B cell (primary cell): ENCODE measurements at regions of chr3 and their contacts with region 1.

Region 1: DNA sequence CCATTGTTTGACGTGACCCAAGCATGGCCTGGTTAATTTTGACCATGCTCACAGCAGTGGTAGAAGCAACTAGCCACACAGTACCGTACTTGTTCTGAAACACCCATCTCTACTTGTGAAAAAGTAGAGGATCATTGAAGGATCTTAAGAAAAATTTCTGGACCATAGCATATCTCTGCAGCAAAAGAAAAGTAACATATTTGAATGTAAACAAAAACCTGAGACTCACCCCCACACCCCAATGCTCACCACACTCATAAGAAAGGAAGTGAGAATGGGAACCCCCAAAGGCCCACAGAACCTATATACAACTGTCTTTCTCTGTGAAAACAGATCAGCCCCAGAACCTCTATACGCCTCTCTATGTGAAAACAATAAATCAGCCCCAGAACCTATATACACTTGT is 33.8 kb upstream of the TFRC start:
- DNase-seq: peak; percentile 80
- ATAC-seq: peak; percentile 66
- H3K4me3 ChIP-seq: peak overlapping the region in 2 of 5 experiments; percentile 2 to 24
- H3K4me3 Mint-ChIP-seq: no peak overlapping the region
- H3K27ac ChIP-seq: peak overlapping the region; percentile 79 to 90
- H3K27ac Mint-ChIP-seq: no peak overlapping the region
- H3K4me1 ChIP-seq: peaks cover 67 to 74% of the 10 kb centered on the region in 2 donors
- H3K4me1 Mint-ChIP-seq: peaks cover 49% of the 10 kb centered on the region
- H3K27me3 ChIP-seq: no peaks in the 10 kb centered on the region
- H3K27me3 Mint-ChIP-seq: no peaks in the 10 kb centered on the region
- CTCF ChIP-seq: no peak

Region 2: GRCh38 chr3:196055683-196056270 is 59.9 kb before region 1 on chr3:
- CTCF ChIA-PET with region 1: no interaction called
- POLR2A ChIA-PET with region 1: no interaction called
- intact Hi-C with region 1: no loop called
- DNase-seq: no peak
- ATAC-seq: no peak
- H3K4me3 ChIP-seq: no peak overlapping the region
- H3K4me3 Mint-ChIP-seq: no peak overlapping the region
- H3K27ac ChIP-seq: no peak overlapping the region
- H3K27ac Mint-ChIP-seq: no peak overlapping the region
- H3K4me1 ChIP-seq: no peaks in the 10 kb centered on the region
- H3K4me1 Mint-ChIP-seq: no peaks in the 10 kb centered on the region
- H3K27me3 ChIP-seq: no peaks in the 10 kb centered on the region
- H3K27me3 Mint-ChIP-seq: no peaks in the 10 kb centered on the region
- CTCF ChIP-seq: no peak

Region 3: GRCh38 chr3:196081791-196082618 is 33.7 kb before region 1 on chr3 and contains the start of gene TFRC:
- CTCF ChIA-PET with region 1: no interaction called
- POLR2A ChIA-PET with region 1: interaction called, 6 read pairs
- intact Hi-C with region 1: loop called (anchors 1 kb)
- DNase-seq: peak; percentile 97
- ATAC-seq: peak; percentile 93
- H3K4me3 ChIP-seq: peak within 1 kb of the TSS; percentile 79 to 99 (median 86)
- H3K4me3 Mint-ChIP-seq: peak within 1 kb of the TSS; percentile 93
- H3K27ac ChIP-seq: peak within 1 kb of the TSS; percentile 84 to 97
- H3K27ac Mint-ChIP-seq: peak within 1 kb of the TSS; percentile 96
- H3K4me1 ChIP-seq: peaks cover 25 to 42% of the 10 kb centered on the region in 2 donors
- H3K4me1 Mint-ChIP-seq: peaks cover 44% of the 10 kb centered on the region
- H3K27me3 ChIP-seq: no peaks in the 10 kb centered on the region
- H3K27me3 Mint-ChIP-seq: no peaks in the 10 kb centered on the region
- CTCF ChIP-seq: no peak
- total RNA-seq, gene TFRC: 104 and 117 TPM in 2 replicates

Region 4: GRCh38 chr3:196096382-196096953 is 19.2 kb before region 1 on chr3:
- CTCF ChIA-PET with region 1: interaction called, 4 read pairs
- POLR2A ChIA-PET with region 1: no interaction called
- intact Hi-C with region 1: loop called (anchors 2 kb)
- DNase-seq: peak; percentile 62
- ATAC-seq: peak; percentile 81
- H3K4me3 ChIP-seq: peak overlapping the region in 2 of 5 experiments; percentile 9 to 18
- H3K4me3 Mint-ChIP-seq: peak overlapping the region; percentile 58
- H3K27ac ChIP-seq: peak overlapping the region; percentile 84 to 86
- H3K27ac Mint-ChIP-seq: peak overlapping the region; percentile 90
- H3K4me1 ChIP-seq: peaks cover 52 to 55% of the 10 kb centered on the region in 2 donors
- H3K4me1 Mint-ChIP-seq: peaks cover 34% of the 10 kb centered on the region
- H3K27me3 ChIP-seq: no peaks in the 10 kb centered on the region
- H3K27me3 Mint-ChIP-seq: no peaks in the 10 kb centered on the region
- CTCF ChIP-seq: no peak

Region 5: GRCh38 chr3:196159952-196160804 is 44.5 kb after region 1 on chr3:
- CTCF ChIA-PET with region 1: no interaction called
- POLR2A ChIA-PET with region 1: interaction called, 9 read pairs
- intact Hi-C with region 1: loop called (anchors 5 kb)
- DNase-seq: peak; percentile 90
- ATAC-seq: peak; percentile 99
- H3K4me3 ChIP-seq: no peak overlapping the region
- H3K4me3 Mint-ChIP-seq: peak overlapping the region; percentile 73
- H3K27ac ChIP-seq: peak overlapping the region; percentile 59 to 75
- H3K27ac Mint-ChIP-seq: peak overlapping the region; percentile 94
- H3K4me1 ChIP-seq: peaks cover 13 to 15% of the 10 kb centered on the region in 2 donors
- H3K4me1 Mint-ChIP-seq: peaks cover 21% of the 10 kb centered on the region
- H3K27me3 ChIP-seq: no peaks in the 10 kb centered on the region
- H3K27me3 Mint-ChIP-seq: no peaks in the 10 kb centered on the region
- CTCF ChIP-seq: no peak

Region 6: DNA sequence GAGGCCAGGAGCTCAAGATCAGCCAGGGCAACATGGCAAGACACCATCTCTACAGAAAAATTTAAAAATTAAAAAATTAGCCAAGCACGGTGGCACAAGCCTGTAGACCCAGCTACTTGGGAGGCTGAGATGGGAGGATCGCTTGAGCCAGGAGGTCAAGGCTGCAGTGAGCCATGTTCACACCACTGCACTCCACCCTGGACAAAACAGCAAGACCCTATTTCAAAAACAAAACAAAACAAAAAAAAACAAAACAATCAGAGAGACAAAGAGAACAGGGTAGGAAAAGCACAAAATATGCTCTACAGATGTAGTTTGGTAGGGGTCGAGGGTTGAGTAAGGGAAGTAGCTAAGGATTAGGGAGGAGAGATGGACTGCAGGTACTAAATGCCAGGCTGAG is 198.9 kb after region 1 on chr3:
- CTCF ChIA-PET with region 1: no interaction called
- POLR2A ChIA-PET with region 1: no interaction called
- intact Hi-C with region 1: no loop called
- DNase-seq: no peak
- ATAC-seq: no peak
- H3K4me3 ChIP-seq: no peak overlapping the region
- H3K4me3 Mint-ChIP-seq: no peak overlapping the region
- H3K27ac ChIP-seq: no peak overlapping the region
- H3K27ac Mint-ChIP-seq: peak overlapping the region; percentile 0
- H3K4me1 ChIP-seq: peaks cover 0 to 8% of the 10 kb centered on the region in 2 donors
- H3K4me1 Mint-ChIP-seq: peaks cover 10% of the 10 kb centered on the region
- H3K27me3 ChIP-seq: no peaks in the 10 kb centered on the region
- H3K27me3 Mint-ChIP-seq: no peaks in the 10 kb centered on the region
- CTCF ChIP-seq: no peak

Region 7: DNA sequence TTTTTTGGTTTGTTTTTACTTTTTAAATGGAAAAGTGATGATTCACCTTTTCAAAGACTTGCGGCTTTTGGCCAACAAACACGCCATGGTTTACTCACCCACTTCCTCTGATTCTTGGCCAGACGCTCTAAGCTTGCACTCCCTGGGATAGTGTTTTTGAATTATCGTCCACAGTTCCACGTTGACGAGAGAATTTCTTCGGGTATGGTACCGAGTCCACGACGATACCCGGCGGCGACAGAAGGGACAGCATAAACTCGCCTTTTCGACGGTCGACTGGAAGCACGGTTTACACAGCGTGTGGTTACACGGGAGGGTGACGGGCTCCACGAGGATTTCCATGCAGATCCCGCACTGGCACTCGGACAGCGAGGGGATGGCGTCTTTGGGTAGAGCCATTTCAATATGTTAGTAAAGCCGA is 387.1 kb after region 1 on chr3:
- CTCF ChIA-PET with region 1: no interaction called
- POLR2A ChIA-PET with region 1: no interaction called
- intact Hi-C with region 1: no loop called
- DNase-seq: peak; percentile 67
- ATAC-seq: peak; percentile 5
- H3K4me3 ChIP-seq: peak overlapping the region; percentile 79 to 87 (median 82)
- H3K4me3 Mint-ChIP-seq: peak overlapping the region; percentile 100
- H3K27ac ChIP-seq: peak overlapping the region; percentile 74 to 83
- H3K27ac Mint-ChIP-seq: peak overlapping the region; percentile 92
- H3K4me1 ChIP-seq: peaks cover 16 to 28% of the 10 kb centered on the region in 2 donors
- H3K4me1 Mint-ChIP-seq: peaks cover 38% of the 10 kb centered on the region
- H3K27me3 ChIP-seq: no peaks in the 10 kb centered on the region
- H3K27me3 Mint-ChIP-seq: no peaks in the 10 kb centered on the region
- CTCF ChIP-seq: no peak